ENCODE measurements at regions of chr2 and their contacts with region 1.

Region 1: DNA sequence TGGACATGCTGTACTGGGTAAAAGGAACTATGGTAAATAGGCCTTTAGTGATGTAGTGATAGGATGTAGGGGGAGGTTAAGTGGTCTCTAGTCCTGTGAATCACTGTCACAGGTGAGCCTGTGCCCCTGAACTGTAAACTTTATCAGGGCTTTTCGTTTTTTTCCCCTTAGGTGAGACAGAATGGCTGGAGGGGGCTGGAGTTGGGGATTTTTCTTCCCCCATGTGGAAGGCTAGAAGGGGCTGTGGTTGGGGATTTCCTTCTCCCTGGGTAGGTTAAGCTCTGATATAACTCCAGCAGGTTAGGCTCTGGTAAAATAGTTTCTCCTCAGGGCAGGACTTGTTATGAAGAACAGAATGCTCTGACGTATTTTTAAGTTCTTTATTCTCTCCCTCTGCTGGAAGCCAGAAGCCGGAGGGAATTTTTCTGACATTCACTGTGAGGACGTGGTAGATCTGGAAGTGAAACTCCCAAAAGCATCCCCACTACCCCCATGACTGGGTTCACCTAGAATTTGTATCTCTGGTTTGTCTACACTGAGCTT is 28.5 kb downstream of the PIKFYVE start:
- DNase-seq: no peak
- ATAC-seq: no peak
- H3K4me3 ChIP-seq: no peak overlapping the region
- H3K27ac ChIP-seq: no peak overlapping the region
- H3K4me1 ChIP-seq: no peaks in the 10 kb centered on the region
- H3K27me3 ChIP-seq: no peaks in the 10 kb centered on the region
- CTCF ChIP-seq: no peak

Region 2: DNA sequence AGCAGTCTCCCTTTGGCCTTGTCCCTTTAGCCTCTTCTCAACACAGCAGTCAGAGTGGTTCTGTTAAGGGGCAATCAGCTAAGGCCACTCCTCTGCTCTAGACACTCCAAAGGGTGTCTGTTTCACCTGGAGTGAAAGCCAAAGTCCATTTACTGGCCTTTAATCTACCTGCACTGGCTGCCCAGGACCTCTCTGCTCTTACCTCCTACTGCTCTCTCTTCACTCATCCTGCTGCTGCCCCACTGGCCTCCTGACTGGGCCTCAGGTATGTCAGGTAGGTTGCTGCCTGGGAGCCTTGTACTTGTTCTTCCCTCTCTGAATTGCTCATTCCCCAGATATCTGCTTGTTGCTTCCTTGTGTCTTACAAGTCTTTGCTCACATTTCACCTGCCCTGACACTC is 39.7 kb after region 1 on chr2:
- intact Hi-C with region 1: loop called in 1 of 2 experiments (anchors 5 kb)
- DNase-seq: no peak
- ATAC-seq: no peak
- H3K4me3 ChIP-seq: no peak overlapping the region
- H3K27ac ChIP-seq: no peak overlapping the region
- H3K4me1 ChIP-seq: no peaks in the 10 kb centered on the region
- H3K27me3 ChIP-seq: no peaks in the 10 kb centered on the region
- CTCF ChIP-seq: no peak